ENCODE measurements at regions of chr19 and their contacts with region 1.

Region 1: GRCh38 chr19:47256688-47257443 is 541 bp downstream of the CCDC9 start:
- DNase-seq: peak; percentile 98 to 100
- H3K4me3 ChIP-seq: peak overlapping the region in 2 of 4 experiments; percentile 78 to 92
- H3K27ac ChIP-seq: no peak overlapping the region
- H3K4me1 ChIP-seq: peaks cover 0 to 8% (median 6%) of the 10 kb centered on the region in 4 experiments; a peak in 6 of 7 replicates
- H3K27me3 ChIP-seq: no peaks in the 10 kb centered on the region
- CTCF ChIP-seq: no peak
- EP300 ChIP-seq: no peak
- POLR2A ChIP-seq: no peak
- RAD21 ChIP-seq: no peak

Region 2: DNA sequence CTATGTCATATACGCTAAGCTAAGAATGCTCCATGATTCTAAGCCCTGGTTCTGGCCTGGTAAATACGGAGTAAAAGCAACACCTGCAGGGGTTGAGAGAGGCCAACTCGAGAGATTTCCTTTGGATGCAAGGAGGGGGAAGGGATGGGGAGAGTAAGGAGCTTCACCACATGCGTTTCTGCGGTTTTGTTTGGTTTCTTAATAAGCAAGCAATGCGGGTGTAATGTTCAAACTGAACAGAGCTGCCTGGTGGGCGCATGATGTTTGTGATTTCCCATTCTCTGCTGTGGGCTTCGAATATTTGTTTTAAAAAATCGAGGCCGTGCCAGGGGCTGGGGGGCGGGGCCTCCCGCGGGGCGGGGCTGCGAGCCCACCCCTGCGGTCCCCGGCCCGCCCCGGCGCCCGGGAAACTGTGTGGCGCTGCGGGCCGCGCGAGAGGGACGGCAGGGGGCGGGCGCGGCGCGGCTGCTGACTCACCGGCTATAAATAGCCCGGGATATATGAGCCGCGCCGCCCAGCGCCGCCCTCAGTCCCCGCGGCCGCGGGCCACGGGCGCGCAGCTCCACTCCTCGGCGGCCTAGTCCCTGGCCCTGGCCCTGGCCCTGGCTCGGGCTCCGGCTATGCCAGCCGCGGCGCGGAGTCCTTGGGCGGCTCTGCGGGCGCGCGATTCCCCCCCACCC is 31.0 kb before region 1 on chr19:
- CTCF ChIA-PET with region 1: interaction called, 3 read pairs
- POLR2A ChIA-PET with region 1: interaction called, 38 read pairs
- DNase-seq: peak in 1 of 2 experiments; percentile 91
- H3K4me3 ChIP-seq: peak overlapping the region; percentile 36 to 99 (median 72); a peak in 7 of 8 replicates
- H3K27ac ChIP-seq: peak overlapping the region; percentile 82; the same call in 1 of the 2 replicates
- H3K4me1 ChIP-seq: peaks cover 5 to 32% (median 17%) of the 10 kb centered on the region in 4 experiments
- H3K27me3 ChIP-seq: no peaks in the 10 kb centered on the region; a peak in 1 of 7 replicates
- CTCF ChIP-seq: peak in 1 of 3 experiments; percentile 39; a peak in 2 of 4 replicates
- EP300 ChIP-seq: peak in 1 of 2 experiments; percentile 71; a peak in 2 of 3 replicates
- POLR2A ChIP-seq: peak; percentile 98 to 100
- RAD21 ChIP-seq: no peak

Region 3: DNA sequence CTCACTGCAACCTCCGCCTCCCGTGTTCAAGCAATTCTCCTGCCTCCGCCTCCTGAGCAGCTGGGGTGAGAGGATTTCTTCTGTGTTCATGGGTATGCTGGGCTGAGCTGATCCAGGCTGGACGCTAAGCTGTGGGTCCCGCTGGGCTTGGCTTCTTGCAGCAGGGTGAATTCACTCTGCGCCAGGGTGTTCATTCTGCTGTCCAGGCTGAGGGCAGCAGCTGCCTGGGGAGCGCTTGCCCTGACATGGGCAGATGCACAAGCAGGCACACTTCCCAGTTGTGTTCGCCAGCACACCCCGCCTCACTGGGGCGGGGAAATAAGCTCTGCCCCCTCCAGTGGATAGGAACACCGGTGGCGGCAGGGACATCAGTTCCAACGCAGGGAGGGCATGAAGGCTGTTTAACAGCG is 10.5 kb after region 1 on chr19:
- CTCF ChIA-PET with region 1: interaction called, 6 read pairs
- POLR2A ChIA-PET with region 1: interaction called, 49 read pairs
- DNase-seq: no peak
- H3K4me3 ChIP-seq: no peak overlapping the region
- H3K27ac ChIP-seq: no peak overlapping the region
- H3K4me1 ChIP-seq: peaks cover 0 to 5% (median 1%) of the 10 kb centered on the region in 4 experiments; a peak in 6 of 7 replicates
- H3K27me3 ChIP-seq: no peaks in the 10 kb centered on the region
- CTCF ChIP-seq: no peak
- EP300 ChIP-seq: no peak
- POLR2A ChIP-seq: no peak
- RAD21 ChIP-seq: no peak

Region 4: GRCh38 chr19:47273313-47273977 is 16.6 kb after region 1 on chr19:
- CTCF ChIA-PET with region 1: interaction called, 6 read pairs
- POLR2A ChIA-PET with region 1: interaction called, 49 read pairs
- DNase-seq: peak; percentile 79 to 92
- H3K4me3 ChIP-seq: peak overlapping the region; percentile 70 to 84 (median 78)
- H3K27ac ChIP-seq: peak overlapping the region; percentile 92
- H3K4me1 ChIP-seq: peaks cover 0 to 19% (median 8%) of the 10 kb centered on the region in 4 experiments; a peak in 6 of 7 replicates
- H3K27me3 ChIP-seq: peaks cover 0 to 10% (median 6%) of the 10 kb centered on the region in 4 experiments; a peak in 5 of 7 replicates
- CTCF ChIP-seq: no peak
- EP300 ChIP-seq: no peak
- POLR2A ChIP-seq: peak; percentile 71 to 78; a peak in 2 of 3 replicates
- RAD21 ChIP-seq: no peak